Gastrocnemius medialis (tissue), 4 donors: ENCODE measurements at regions of chr5 and their contacts with region 1.

Region 1: GRCh38 chr5:154857530-154858296 is 714 bp upstream of the CNOT8 start:
- DNase-seq: peak; percentile 93 to 98
- ATAC-seq: peak; percentile 82 to 84
- H3K4me3 ChIP-seq: peak overlapping the region; percentile 74 to 98 (median 92)
- H3K27ac ChIP-seq: peak overlapping the region; percentile 95 to 97 (median 97)
- H3K4me1 ChIP-seq: peaks cover 33 to 35% of the 10 kb centered on the region in 2 donors
- H3K27me3 ChIP-seq: no peaks in the 10 kb centered on the region
- CTCF ChIP-seq: peak in 2 of 5 experiments; percentile 11 to 18
- POLR2A ChIP-seq: peak; percentile 64 to 83

Region 2: GRCh38 chr5:154647114-154647760 is 210.5 kb before region 1 on chr5:
- in situ Hi-C with region 1: no loop called
- intact Hi-C with region 1: loop called (anchors 5 kb)
- DNase-seq: peak; percentile 5 to 73
- ATAC-seq: peak; percentile 56 to 79
- H3K4me3 ChIP-seq: peak overlapping the region; percentile 19 to 46 (median 36)
- H3K27ac ChIP-seq: no peak overlapping the region
- H3K4me1 ChIP-seq: peaks cover 5 to 7% of the 10 kb centered on the region in 2 donors
- H3K27me3 ChIP-seq: no peaks in the 10 kb centered on the region
- CTCF ChIP-seq: no peak
- POLR2A ChIP-seq: no peak

Region 3: DNA sequence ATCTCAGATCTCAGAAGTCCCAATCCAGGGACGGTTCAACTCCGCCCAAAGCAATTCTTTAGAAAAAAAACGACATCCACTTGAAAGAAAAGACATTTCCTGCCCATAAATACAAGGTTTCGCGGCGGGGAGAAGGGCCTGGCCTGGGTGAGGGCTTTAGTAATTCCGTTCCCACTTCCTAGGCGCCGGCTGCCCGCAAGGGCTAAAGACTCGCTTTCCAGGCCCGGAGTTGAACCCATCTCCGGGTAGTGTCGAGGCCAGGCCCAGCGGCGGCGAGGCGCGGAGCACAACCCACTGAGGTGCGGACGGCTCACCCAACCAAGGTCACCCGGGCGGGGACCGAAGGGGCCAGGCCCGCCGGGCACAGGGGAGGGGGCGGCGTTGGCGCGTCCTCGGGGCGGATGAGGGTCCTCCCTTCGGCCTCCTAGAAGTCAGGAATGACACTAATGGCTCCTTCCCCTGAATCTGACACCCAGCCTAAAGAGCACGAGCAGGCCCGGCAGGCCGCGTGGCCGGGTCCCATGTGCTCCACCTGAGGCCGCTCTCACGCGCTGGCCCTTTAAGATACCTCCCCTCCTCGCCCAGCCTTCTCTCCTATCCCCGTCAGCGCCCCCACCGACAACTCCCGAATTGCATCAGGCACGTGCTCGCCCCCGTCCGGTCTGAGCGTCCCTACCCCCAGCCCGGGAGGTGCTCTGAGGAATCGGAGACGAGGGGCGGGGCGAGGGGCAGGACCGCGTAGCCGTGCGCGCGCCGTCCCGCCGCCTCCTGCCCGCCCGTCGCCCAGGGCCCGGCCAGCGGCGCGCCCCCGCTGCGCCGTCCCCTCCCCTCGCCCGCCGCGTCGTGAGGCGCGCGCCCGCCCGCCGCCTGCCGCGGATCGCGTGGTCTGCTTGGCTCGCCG is 103.0 kb before region 1 on chr5:
- in situ Hi-C with region 1: no loop called
- intact Hi-C with region 1: loop called (anchors 1 kb)
- DNase-seq: peak; percentile 99 to 100
- ATAC-seq: peak; percentile 66 to 76
- H3K4me3 ChIP-seq: peak overlapping the region; percentile 88 to 97 (median 94)
- H3K27ac ChIP-seq: peak overlapping the region; percentile 99 to 100 (median 100)
- H3K4me1 ChIP-seq: peaks cover 37 to 42% of the 10 kb centered on the region in 2 donors
- H3K27me3 ChIP-seq: no peaks in the 10 kb centered on the region
- CTCF ChIP-seq: peak in 3 of 5 experiments; percentile 20 to 54 (median 29)
- POLR2A ChIP-seq: peak; percentile 78 to 90

Region 4: GRCh38 chr5:154899151-154899816 is 41.6 kb after region 1 on chr5:
- in situ Hi-C with region 1: no loop called
- intact Hi-C with region 1: loop called (anchors 5 kb)
- DNase-seq: peak; percentile 20 to 61
- ATAC-seq: peak; percentile 57 to 65
- H3K4me3 ChIP-seq: no peak overlapping the region
- H3K27ac ChIP-seq: peak overlapping the region; percentile 40 to 67 (median 54)
- H3K4me1 ChIP-seq: no peaks in the 10 kb centered on the region
- H3K27me3 ChIP-seq: no peaks in the 10 kb centered on the region
- CTCF ChIP-seq: no peak
- POLR2A ChIP-seq: no peak

Region 5: GRCh38 chr5:154923441-154924430 is 66.0 kb after region 1 on chr5:
- in situ Hi-C with region 1: no loop called
- intact Hi-C with region 1: no loop called
- DNase-seq: no peak
- ATAC-seq: no peak
- H3K4me3 ChIP-seq: no peak overlapping the region
- H3K27ac ChIP-seq: no peak overlapping the region
- H3K4me1 ChIP-seq: no peaks in the 10 kb centered on the region
- H3K27me3 ChIP-seq: no peaks in the 10 kb centered on the region
- CTCF ChIP-seq: no peak
- POLR2A ChIP-seq: no peak

Region 6: DNA sequence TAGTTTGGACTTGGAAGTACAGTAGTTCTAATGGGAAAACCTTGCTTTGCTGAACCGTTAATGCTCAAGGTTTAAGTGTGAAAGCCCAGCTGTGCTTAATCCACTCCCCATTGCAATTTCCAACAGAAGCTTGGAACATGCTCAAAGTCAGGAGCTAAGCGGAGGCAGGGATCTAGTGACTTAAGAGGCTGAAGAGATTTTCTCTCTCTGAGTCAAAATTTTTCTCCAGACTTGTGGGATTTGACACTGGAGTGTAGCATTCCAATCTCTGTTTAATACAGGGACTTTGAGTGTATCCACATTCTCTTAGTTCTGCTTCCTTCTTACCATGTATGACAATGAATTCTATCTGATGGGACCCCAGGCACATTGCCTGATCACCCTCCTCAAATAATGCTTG is 627.7 kb after region 1 on chr5:
- in situ Hi-C with region 1: no loop called
- intact Hi-C with region 1: no loop called
- DNase-seq: no peak
- ATAC-seq: no peak
- H3K4me3 ChIP-seq: no peak overlapping the region
- H3K27ac ChIP-seq: no peak overlapping the region
- H3K4me1 ChIP-seq: no peaks in the 10 kb centered on the region
- H3K27me3 ChIP-seq: no peaks in the 10 kb centered on the region
- CTCF ChIP-seq: no peak
- POLR2A ChIP-seq: no peak

Region 7: DNA sequence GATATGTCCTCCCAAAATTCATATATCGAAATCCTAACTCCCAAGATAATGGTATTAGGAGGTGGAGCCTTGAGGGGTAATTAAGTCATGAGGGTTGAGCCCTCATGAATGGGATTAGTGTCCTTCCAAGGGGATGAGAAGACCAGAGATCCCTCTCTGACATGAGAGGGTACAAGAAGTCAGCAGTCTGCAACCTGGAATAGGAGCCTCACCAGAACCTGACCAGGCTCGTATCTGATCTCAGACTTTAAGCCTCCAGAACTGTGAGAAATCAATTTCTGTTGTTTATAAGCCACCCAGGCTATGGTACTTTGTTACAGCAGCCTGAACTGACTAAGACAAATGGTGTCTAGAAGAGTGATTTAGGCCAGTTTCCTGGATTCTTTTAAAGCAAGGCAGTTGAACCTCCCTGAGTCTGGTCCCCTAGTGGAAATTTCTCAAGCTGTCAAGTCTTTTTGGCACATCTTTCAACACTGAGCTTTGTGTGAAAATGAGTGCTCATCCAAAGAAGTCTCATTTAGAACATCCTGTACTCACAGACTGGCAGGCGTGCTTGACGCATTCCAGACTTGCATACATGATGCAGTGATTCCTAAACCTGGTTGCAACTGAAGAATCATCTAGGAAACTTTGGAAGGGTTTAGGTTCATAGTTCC is 1737.5 kb after region 1 on chr5:
- in situ Hi-C with region 1: no loop called
- intact Hi-C with region 1: loop called (anchors 10 kb)
- DNase-seq: peak; percentile 65 to 87
- ATAC-seq: peak; percentile 96 to 99
- H3K4me3 ChIP-seq: no peak overlapping the region
- H3K27ac ChIP-seq: peak overlapping the region; percentile 53 to 86 (median 71)
- H3K4me1 ChIP-seq: peaks cover 4 to 21% of the 10 kb centered on the region in 2 donors
- H3K27me3 ChIP-seq: no peaks in the 10 kb centered on the region
- CTCF ChIP-seq: peak in 3 of 5 experiments; percentile 29 to 42 (median 33)
- POLR2A ChIP-seq: no peak